ENCODE measurements at regions of chr2 and their contacts with region 1.

Region 1: DNA sequence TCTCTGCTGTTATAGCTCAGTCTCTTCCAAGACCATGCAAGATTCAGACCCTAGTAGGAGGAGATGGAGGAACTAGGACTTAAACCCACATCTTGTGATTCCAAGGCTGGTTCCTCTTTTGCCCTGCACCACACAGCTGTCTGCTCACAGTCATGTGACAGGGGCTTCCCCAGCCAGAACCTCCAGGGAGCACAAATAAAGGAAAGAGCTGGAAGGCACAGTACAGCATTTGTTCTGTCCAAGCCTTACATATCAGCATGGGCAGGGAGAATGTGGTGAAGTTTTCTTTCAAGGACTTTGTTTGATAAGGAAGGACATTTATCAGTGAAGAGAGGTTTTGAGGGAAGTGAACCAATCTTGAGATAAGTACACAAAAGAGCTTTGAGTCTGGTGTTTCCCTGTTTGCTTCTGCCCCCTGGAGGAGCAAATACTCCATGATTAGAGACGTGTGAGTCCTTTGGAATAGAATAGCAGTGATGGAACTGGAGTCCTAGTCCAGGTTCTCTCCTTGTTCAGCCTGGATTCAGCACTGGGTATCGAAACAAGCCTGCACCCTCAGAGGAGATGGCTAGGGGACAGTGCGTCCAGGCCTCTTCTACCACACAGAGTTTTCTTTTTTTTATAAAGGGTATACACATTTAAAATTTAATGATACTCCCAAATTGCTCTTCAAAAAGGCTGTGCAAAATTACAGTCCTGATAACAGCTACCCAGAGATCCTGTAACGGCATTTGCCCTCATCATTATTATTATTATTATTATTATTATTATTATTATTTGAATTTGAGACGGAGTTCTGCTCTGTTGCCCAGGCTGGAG is 24.6 kb upstream of the CASP10 start:
- DNase-seq: peak; percentile 61
- H3K4me3 ChIP-seq: no peak overlapping the region
- H3K27ac ChIP-seq: peak overlapping the region; percentile 10 to 45
- H3K4me1 ChIP-seq: no peaks in the 10 kb centered on the region
- H3K27me3 ChIP-seq: no peaks in the 10 kb centered on the region
- CTCF ChIP-seq: peak in 3 of 4 experiments; percentile 50 to 72 (median 57)
- POLR2A ChIP-seq: no peak

Region 2: DNA sequence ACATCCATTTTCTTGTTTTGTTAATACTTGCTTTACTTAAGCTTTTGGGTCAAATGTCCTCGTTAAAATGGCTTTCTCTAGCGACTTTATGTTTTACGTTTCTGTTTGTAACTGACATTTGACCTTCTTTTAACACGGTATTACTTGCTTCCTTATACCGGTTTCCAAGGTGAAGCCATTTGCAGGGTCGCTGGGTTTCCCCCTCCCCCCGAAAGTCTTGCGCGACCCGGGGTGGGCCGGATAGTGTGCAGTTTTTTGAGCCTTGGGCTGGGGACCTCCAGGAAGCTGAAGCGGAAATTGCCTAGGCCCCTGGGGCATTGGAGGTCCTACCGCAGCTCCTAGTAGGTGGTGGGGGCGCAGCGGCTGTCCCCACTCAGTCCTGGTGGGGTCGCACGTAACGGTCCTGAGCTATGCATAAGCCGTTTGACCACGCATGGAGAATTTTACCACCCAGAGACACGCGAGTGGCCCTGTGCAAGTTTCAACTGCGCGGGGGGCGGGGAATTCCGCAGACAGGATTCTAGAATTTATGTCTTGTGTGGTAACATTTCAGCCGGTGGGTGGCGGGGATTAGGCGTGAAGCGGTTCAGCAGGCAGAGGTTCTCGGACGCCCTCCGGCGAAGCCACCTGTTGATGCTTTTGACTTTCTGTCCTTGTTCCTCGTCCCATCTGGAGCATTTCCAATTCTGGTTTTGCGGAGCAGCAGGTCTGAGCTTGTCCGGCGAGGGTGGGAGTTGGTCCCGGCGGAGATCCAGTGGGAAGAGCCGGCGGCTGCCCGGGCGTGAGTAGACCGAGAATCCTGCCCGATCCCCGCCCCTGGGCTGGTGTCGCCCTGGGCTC is 40.0 kb before region 1 on chr2:
- intact Hi-C with region 1: loop called (anchors 5 kb)
- DNase-seq: peak; percentile 94
- H3K4me3 ChIP-seq: peak overlapping the region; percentile 90 to 95
- H3K27ac ChIP-seq: peak overlapping the region; percentile 99
- H3K4me1 ChIP-seq: no peaks in the 10 kb centered on the region
- H3K27me3 ChIP-seq: no peaks in the 10 kb centered on the region
- CTCF ChIP-seq: peak in 3 of 4 experiments; percentile 36 to 45 (median 41)
- POLR2A ChIP-seq: peak; percentile 12